Posterior cingulate gyrus (tissue), 11 donors: ENCODE measurements at regions of chr2 and their contacts with region 1.

Region 1: GRCh38 chr2:64644177-64645004 is 9.3 kb downstream of the SERTAD2 start:
- DNase-seq: peak in 2 of 10 donors; percentile 45 to 91

Region 2: GRCh38 chr2:64015391-64015790 is 629.0 kb before region 1 on chr2:
- intact Hi-C with region 1: no loop called
- DNase-seq: no peak

Region 3: GRCh38 chr2:64609227-64609941 is 35.0 kb before region 1 on chr2:
- intact Hi-C with region 1: loop called (anchors 5 kb)
- DNase-seq: peak in 5 of 10 donors; percentile 31 to 93 (median 62)

Region 4: DNA sequence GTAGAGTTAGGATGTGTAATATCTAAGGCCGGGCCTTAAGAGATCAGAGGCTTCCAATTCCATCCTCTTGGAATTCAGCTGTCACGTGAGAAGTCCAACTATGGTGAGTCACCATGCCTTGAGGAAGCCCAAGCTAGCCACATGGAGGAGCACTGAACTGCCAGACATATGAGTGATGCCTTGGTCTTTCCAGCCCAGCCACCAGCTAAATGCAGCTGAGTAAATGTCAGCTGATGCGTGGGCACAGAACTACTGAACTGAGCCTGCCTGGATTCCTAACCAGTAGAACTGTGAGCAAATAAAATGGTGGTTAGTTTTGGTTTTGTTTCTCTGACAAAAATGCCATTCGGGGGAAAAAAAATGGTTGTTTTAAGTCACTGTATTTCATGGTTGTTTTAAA is 163.0 kb after region 1 on chr2:
- intact Hi-C with region 1: no loop called
- DNase-seq: no peak

Region 5: DNA sequence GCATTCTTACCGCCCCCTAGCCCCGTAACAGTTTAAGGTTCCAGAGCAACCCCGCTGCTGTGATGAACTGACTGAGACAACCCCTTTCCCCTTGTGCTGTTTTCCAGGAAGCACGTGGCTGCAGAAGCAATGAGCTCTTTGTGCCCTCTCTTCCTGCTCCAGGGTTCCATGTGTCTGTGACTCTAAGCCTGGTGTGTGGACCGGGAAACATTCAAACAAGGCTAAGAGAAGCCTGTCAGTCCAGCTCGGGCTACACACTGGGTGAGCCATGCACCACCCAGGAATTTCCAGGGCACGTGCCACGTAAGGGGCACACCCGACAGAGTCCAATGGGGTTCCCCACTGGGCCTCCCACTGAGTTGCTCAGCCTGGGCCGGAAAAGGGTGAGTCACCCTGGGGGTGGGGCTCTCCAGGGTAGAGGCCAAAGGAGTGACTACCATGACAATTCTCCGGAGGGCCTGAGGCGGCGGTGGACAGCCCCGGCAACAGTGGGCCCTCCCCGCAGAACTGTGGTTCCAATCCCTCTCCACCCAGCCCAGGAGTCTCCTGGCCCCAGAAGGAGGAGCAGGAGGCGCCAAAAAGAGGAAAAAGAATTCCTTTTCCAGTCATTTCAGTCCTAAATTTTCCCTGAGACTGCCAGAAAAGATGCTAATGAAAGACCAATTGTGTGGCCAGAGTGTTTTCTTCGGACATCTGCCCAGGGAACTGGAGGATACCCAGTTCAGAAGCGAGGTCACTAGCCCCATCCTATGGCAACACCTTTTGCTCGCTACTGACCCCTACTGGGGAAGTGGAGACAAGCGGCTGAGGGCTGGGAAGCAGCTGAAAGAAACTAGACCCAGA is 187.0 kb after region 1 on chr2:
- intact Hi-C with region 1: loop called (anchors 10 kb)
- DNase-seq: peak; percentile 37 to 93 (median 76)